A673 (cell line): ENCODE measurements at regions of chr13 and their contacts with region 1.

Region 1: GRCh38 chr13:95403828-95404522 is 102.7 kb upstream of the ABCC4 start:
- DNase-seq: peak; percentile 89
- H3K4me3 ChIP-seq: peak overlapping the region; percentile 51
- H3K27ac ChIP-seq: peak overlapping the region; percentile 77
- H3K4me1 ChIP-seq: peaks cover 6% of the 10 kb centered on the region
- H3K27me3 ChIP-seq: no peaks in the 10 kb centered on the region
- CTCF ChIP-seq: peak; percentile 92

Region 2: GRCh38 chr13:94435604-94436226 is 968.3 kb before region 1 on chr13:
- CTCF ChIA-PET with region 1: no interaction called
- POLR2A ChIA-PET with region 1: no interaction called
- intact Hi-C with region 1: loop called (anchors 10 kb)
- DNase-seq: peak; percentile 75
- H3K4me3 ChIP-seq: no peak overlapping the region
- H3K27ac ChIP-seq: no peak overlapping the region
- H3K4me1 ChIP-seq: no peaks in the 10 kb centered on the region
- H3K27me3 ChIP-seq: no peaks in the 10 kb centered on the region
- CTCF ChIP-seq: peak; percentile 68

Region 3: DNA sequence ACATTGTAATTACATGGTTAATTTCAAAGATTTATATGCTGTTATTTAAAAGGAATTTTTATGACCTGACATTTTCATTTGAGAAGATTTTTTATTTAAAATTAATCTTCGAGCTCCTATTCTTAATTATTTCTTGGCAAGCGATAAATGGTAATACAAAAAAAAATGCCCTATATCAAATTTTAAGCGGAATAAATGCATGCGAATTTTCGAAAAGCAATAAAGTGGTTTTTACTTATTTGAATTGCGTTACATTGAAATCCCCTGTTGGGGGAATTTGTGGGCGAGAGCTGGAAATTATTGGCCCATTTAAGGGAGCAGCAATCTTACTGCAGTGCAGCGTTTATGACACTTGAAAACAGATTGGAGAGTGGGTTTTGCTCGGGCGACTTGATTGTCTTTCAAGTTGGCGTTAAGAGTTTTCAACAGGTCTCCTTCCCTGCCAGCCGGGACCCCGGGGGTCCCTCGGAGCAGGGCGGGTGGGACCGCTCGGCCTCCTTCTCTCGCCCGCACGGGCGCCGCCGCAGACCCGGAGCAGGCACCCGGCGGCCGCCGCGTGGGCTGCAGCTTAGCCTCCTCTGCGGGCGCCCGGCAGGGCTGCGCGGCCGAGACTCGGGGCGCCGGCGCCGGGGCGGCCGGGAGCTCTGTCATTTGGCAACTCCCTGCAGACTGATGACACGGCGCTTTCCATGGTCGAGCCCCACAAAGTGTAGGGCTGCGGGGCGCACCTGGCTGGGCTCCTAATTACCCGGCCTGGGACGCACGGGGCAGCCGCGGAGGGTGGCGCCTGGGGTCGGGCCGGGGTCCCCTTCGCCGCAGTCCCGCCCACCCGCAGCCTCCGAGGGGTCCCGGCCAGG is 436.6 kb before region 1 on chr13:
- CTCF ChIA-PET with region 1: no interaction called
- POLR2A ChIA-PET with region 1: no interaction called
- intact Hi-C with region 1: loop called (anchors 10 kb)
- DNase-seq: peak; percentile 39
- H3K4me3 ChIP-seq: peak overlapping the region; percentile 51
- H3K27ac ChIP-seq: no peak overlapping the region
- H3K4me1 ChIP-seq: peaks cover 8% of the 10 kb centered on the region
- H3K27me3 ChIP-seq: peaks cover 74% of the 10 kb centered on the region
- CTCF ChIP-seq: no peak

Region 4: GRCh38 chr13:95378603-95379002 is 25.4 kb before region 1 on chr13:
- CTCF ChIA-PET with region 1: interaction called, 19 read pairs
- POLR2A ChIA-PET with region 1: no interaction called
- intact Hi-C with region 1: no loop called
- DNase-seq: no peak
- H3K4me3 ChIP-seq: no peak overlapping the region
- H3K27ac ChIP-seq: no peak overlapping the region
- H3K4me1 ChIP-seq: peaks cover 5% of the 10 kb centered on the region
- H3K27me3 ChIP-seq: no peaks in the 10 kb centered on the region
- CTCF ChIP-seq: no peak

Region 5: GRCh38 chr13:95660981-95661581 is 257.1 kb after region 1 on chr13:
- CTCF ChIA-PET with region 1: no interaction called
- POLR2A ChIA-PET with region 1: no interaction called
- intact Hi-C with region 1: no loop called
- DNase-seq: peak; percentile 61
- H3K4me3 ChIP-seq: no peak overlapping the region
- H3K27ac ChIP-seq: no peak overlapping the region
- H3K4me1 ChIP-seq: no peaks in the 10 kb centered on the region
- H3K27me3 ChIP-seq: no peaks in the 10 kb centered on the region
- CTCF ChIP-seq: peak; percentile 73

Region 6: DNA sequence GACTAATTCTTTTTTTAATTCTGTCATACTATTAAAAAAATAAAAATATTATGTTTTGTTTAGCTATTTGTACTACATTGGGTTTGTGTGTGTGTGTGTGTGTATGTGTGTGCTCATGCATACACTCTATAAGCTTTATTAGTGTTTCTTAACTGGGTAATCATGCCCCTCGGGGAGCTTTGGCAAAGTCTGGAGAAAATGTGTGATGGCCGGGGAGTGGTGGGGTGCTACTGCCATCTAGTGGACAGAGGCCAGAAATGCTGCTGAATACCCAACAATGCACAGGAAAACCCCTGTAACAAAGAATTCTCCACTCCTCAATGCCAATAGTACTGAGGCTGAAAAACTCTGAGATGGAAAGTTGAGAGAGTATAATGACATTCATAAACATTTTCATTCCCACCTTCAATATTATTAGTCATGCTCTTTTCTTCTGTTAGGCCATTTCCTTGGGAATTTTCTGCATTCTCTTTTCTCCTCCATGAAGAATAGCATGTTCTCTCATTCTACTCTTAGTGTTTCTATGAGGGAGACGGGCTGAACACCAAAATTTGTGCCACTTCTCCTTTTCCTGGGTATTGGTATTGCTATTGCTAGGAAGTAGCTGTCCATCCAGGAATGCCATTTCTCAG is 430.3 kb after region 1 on chr13:
- CTCF ChIA-PET with region 1: no interaction called
- POLR2A ChIA-PET with region 1: no interaction called
- intact Hi-C with region 1: loop called (anchors 5 kb)
- DNase-seq: peak; percentile 87
- H3K4me3 ChIP-seq: no peak overlapping the region
- H3K27ac ChIP-seq: no peak overlapping the region
- H3K4me1 ChIP-seq: peaks cover 8% of the 10 kb centered on the region
- H3K27me3 ChIP-seq: no peaks in the 10 kb centered on the region
- CTCF ChIP-seq: peak; percentile 83